Activated T-helper 2 cell treated with anti-CD3 and anti-CD28 coated beads, Interferon-gamma antibody, Interleukin-2, Interleukin-4, amounts not matched to agents 10 μg/mL and 5 μg/mL and 100 μg/mL, durations not matched to agents 14 hours and 24 hours and 36 hours (primary cell): ENCODE measurements at regions of chr7 and their contacts with region 1.

Region 1: DNA sequence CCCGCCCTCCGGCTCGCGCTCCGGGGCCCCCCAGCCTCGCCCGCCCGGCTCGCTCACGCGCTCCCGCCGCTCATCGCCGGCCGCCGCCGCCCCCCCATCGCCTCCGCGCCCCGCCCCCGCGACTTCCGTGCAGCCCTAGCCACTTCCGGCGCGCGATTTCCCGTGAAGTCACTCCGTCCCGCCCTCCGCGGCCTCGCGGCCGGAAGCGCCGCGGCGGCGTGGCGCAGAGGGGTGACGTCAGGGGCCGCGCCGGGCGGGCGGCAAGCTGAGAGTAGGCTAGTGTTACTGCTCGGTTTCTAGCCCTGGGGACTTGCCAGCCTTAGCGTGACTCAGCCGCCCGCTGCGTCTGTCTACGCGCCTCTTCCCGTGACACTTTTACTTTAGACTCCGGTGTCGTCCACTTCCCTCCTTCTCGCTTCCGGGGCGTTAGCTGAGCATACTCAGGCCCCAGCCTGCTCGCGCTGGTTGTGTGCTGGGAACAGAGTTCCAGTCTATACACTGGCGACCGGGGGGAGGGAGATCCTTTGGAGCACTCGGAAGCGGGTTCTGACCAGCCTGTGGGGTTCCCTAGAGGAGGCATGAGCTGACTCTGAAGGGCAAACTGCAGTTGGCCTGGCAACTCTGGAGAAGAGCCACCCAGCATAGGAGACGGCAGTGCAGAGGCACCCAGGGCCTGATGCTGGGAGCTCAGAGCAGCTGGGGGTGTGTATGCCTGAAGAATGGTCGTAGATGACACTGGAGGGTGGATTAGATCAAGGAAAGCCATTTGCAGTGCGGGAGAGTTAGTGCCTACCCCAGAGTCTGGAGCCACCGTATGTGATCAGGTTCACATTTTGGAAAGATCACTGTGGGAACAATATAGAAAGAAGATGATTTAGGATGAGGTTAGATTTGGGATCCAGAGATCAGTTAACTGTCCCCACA is at the start of gene PURB:
- DNase-seq: peak; percentile 97
- H3K4me3 Mint-ChIP-seq: peak within 1 kb of the TSS; percentile 97
- H3K27ac Mint-ChIP-seq: peak within 1 kb of the TSS; percentile 99
- H3K4me1 Mint-ChIP-seq: peaks cover 35% of the 10 kb centered on the region
- H3K27me3 Mint-ChIP-seq: no peaks in the 10 kb centered on the region
- total RNA-seq, gene PURB: 32.9 and 33.9 TPM in 2 replicates

Region 2: GRCh38 chr7:44200647-44201461 is 684.8 kb before region 1 on chr7 and contains the start of gene YKT6:
- intact Hi-C with region 1: no loop called
- DNase-seq: peak; percentile 92
- H3K4me3 Mint-ChIP-seq: peak within 1 kb of the TSS; percentile 88
- H3K27ac Mint-ChIP-seq: peak within 1 kb of the TSS; percentile 74
- H3K4me1 Mint-ChIP-seq: peaks cover 29% of the 10 kb centered on the region
- H3K27me3 Mint-ChIP-seq: no peaks in the 10 kb centered on the region
- total RNA-seq, gene YKT6: 73.1 and 76.4 TPM in 2 replicates

Region 3: DNA sequence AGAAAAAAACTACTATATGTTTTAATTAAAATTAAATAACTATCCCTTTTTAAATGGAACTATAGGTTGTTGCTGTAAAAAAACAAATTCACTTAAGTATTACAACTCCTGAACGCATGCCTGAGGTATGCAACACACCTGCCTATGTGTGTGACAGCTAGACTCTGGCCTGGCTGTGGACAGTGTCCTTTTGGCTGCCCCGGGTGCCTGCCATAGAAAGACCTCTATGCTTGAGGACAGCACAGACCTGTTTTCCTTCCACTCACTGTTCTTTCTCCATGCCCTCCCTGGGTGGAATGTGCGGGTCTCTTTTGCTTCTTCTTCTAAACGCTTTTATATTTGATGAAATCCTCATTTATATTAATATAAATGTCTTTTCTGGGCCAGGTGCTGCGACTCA is 95.7 kb before region 1 on chr7:
- intact Hi-C with region 1: no loop called
- DNase-seq: no peak
- H3K4me3 Mint-ChIP-seq: no peak overlapping the region
- H3K27ac Mint-ChIP-seq: no peak overlapping the region
- H3K4me1 Mint-ChIP-seq: no peaks in the 10 kb centered on the region
- H3K27me3 Mint-ChIP-seq: no peaks in the 10 kb centered on the region

Region 4: DNA sequence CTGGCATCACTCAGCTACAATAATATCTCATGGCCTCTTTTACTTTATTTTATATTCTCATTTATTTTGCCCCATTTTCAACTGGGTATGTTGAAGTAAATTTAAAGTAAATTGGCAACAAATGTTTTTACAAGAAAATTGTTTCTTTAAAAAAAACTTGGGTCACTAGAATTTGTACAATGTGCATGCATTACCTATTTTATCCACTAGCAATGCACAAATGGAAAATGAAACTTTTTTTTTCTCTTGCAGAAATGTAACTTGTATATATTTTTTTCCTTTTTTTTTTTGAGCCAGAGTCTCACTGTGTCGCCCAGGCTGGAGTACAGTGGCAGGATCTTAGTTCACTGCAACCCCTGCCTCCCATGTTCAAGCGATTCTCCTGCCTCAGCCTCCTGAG is 27.5 kb before region 1 on chr7:
- intact Hi-C with region 1: loop called (anchors 1 kb)
- DNase-seq: no peak
- H3K4me3 Mint-ChIP-seq: no peak overlapping the region
- H3K27ac Mint-ChIP-seq: no peak overlapping the region
- H3K4me1 Mint-ChIP-seq: peaks cover 13% of the 10 kb centered on the region
- H3K27me3 Mint-ChIP-seq: peaks cover 10% of the 10 kb centered on the region

Region 5: GRCh38 chr7:44914992-44915607 is 29.4 kb after region 1 on chr7:
- intact Hi-C with region 1: loop called (anchors 1 kb)
- DNase-seq: peak; percentile 78
- H3K4me3 Mint-ChIP-seq: peak overlapping the region; percentile 13
- H3K27ac Mint-ChIP-seq: peak overlapping the region; percentile 92
- H3K4me1 Mint-ChIP-seq: peaks cover 14% of the 10 kb centered on the region
- H3K27me3 Mint-ChIP-seq: no peaks in the 10 kb centered on the region

Region 6: DNA sequence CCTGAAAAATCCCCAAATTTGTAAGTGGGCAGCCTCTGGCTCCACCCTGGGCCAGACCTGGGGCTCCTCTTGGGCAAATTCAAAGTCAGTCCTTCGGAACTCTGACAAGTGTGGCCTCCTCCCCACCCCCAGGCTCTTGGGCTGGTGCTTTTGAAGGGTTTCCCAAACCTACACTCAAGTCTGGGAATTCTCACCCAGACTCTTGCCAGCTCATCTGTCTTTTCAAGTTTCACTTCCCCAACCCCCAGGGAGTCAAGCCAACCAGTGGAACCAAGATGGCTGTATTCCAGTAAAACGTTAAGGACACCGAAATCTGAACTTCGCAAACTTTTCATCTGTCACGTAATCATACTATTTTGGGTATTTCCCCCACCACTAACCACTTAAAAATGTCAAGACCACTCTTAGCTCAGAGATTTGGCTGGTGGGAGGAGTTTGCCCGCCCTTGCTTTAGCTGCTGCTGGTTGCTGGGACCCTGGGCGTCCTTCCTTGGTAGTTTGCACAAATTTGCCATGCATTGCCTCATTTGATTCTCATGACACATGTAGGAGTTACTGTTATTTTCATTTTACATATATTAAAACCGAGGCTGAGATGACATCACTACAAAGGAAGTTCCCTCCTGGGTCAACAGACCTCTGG is 94.9 kb after region 1 on chr7:
- intact Hi-C with region 1: loop called (anchors 1 kb)
- DNase-seq: peak; percentile 56
- H3K4me3 Mint-ChIP-seq: peak overlapping the region; percentile 97
- H3K27ac Mint-ChIP-seq: peak overlapping the region; percentile 98
- H3K4me1 Mint-ChIP-seq: peaks cover 63% of the 10 kb centered on the region
- H3K27me3 Mint-ChIP-seq: no peaks in the 10 kb centered on the region

Region 7: GRCh38 chr7:44999245-45000095 is 113.8 kb after region 1 on chr7:
- intact Hi-C with region 1: loop called (anchors 1 kb)
- DNase-seq: peak; percentile 100
- H3K4me3 Mint-ChIP-seq: peak overlapping the region; percentile 86
- H3K27ac Mint-ChIP-seq: peak overlapping the region; percentile 93
- H3K4me1 Mint-ChIP-seq: peaks cover 50% of the 10 kb centered on the region
- H3K27me3 Mint-ChIP-seq: no peaks in the 10 kb centered on the region

Region 8: DNA sequence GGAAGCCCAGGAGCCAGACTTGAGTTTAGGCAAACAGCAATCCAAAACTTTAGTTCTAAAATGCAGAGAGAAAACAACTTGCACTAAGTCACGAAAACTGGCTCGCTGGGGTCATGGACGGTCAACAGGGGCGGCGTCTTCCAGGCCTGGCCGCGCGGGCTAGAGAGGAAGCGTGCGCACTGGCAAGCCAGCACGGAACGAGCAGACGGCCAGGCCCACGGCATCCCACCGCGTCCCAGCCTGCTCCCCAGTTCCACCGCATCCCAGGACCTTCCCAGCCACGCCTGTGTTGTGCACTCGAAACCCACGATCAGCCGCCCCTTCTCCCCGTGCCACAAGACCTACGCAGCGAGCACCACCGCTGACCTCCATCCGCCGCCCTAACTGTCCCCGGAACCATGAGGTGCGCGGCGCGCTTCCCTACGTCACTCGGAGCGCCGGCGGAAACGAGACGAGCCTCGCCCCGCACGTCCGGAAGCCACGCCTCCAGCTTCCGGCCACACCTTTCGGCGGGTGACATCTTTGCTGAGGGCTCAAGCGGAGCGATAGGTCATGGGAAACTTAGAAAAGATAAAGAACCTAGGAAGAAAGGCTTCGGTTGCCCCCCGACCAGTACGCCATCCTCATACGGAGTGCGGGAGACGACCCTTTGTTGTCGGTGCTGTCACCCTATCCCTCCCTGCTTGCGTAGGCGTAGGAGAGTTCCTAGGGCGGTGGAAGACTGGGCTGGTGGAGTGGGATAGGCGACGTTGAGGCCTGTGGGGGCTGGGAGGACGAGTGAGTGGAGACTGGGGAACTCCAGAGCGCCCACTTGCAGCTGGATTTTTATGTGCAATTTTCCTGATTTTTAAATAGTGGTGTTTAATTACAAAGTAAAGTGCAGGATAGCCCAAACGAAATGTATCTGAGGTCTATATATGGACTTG is 225.9 kb after region 1 on chr7 and contains the start of gene TBRG4:
- intact Hi-C with region 1: loop called (anchors 2 kb)
- DNase-seq: peak; percentile 93
- H3K4me3 Mint-ChIP-seq: peak within 1 kb of the TSS; percentile 98
- H3K27ac Mint-ChIP-seq: peak within 1 kb of the TSS; percentile 96
- H3K4me1 Mint-ChIP-seq: peaks cover 34% of the 10 kb centered on the region
- H3K27me3 Mint-ChIP-seq: peaks cover 20% of the 10 kb centered on the region
- total RNA-seq, gene TBRG4: 167 and 180 TPM in 2 replicates

Region 9: DNA sequence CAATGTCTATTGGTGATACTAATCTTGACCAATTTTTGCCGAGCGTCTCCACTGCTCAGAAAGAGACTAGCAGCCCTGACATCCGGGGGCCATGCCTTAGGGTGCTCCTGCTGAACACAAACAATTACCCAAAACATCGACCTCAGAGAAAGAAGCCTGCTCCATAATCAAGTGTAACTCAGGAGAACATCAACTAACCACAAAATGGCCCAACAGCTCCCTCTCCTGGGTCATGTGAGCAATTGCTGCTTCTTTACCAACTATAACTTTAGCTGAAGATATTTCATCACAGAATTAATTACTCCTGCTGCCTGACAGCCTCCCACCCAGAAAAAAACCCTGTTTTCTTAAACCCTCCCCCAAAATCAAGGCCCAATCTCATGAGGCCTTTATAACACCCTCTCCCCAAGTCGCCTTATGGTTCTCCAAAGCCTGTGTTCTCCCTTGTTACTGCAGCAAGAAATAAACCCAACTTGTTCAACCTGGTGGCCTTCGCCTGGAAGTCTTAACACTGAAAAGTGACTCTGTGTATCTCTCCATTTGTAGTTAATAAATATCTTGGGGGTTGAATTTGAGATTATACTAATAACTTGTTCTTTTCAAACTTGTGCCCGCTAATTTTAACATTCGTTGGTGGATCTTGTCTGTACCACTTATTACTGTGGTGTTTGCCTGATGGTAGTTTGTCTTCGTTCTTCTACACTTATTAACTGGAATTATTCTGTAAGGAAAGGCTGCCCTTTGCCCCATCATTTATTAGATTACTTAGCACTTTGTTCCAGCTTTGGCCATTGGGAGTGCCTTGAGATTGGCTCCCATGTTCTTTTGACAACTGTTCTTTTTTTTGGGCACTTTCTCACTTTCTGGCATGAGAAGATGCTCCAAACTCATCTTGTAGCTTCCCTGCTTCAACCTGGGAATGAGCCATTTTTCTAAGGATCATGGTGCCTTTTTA is 250.7 kb after region 1 on chr7:
- intact Hi-C with region 1: loop called (anchors 2 kb)
- DNase-seq: peak; percentile 52
- H3K4me3 Mint-ChIP-seq: no peak overlapping the region
- H3K27ac Mint-ChIP-seq: no peak overlapping the region
- H3K4me1 Mint-ChIP-seq: peaks cover 16% of the 10 kb centered on the region
- H3K27me3 Mint-ChIP-seq: peaks cover 15% of the 10 kb centered on the region